Breast epithelium (tissue), 4 donors: ENCODE measurements at regions of chr12 and their contacts with region 1.

Region 1: GRCh38 chr12:113664224-113664681 is 192.6 kb upstream of the LHX5 start:
- DNase-seq: no peak
- H3K4me3 ChIP-seq: no peak overlapping the region
- H3K27ac ChIP-seq: no peak overlapping the region
- H3K4me1 ChIP-seq: no peaks in the 10 kb centered on the region
- H3K27me3 ChIP-seq: peaks cover 0 to 44% of the 10 kb centered on the region in 2 donors
- CTCF ChIP-seq: no peak
- POLR2A ChIP-seq: no peak

Region 2: DNA sequence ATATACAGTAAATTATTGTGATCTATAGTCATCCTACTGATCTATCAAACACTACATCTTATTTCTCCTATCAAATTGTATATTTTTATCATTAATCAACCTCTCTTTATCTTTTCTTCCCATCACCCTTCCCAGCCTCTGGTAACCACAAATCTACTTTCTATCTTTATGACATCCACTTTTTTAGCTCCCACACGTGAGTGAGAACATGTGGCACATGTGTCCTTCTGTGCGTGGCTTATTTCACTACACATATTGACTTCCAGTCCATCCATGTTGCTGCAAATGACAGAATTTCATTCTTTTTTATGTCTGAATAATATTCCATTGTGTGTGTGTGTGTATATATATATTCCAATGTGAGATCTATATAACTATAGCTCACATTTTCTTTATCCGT is 809.5 kb after region 1 on chr12:
- intact Hi-C with region 1: loop called (anchors 5 kb)
- DNase-seq: no peak
- H3K4me3 ChIP-seq: no peak overlapping the region
- H3K27ac ChIP-seq: no peak overlapping the region
- H3K4me1 ChIP-seq: no peaks in the 10 kb centered on the region
- H3K27me3 ChIP-seq: peaks cover 0 to 24% of the 10 kb centered on the region in 2 donors
- CTCF ChIP-seq: no peak
- POLR2A ChIP-seq: no peak